Activated CD4-positive, alpha-beta memory T cell treated with anti-CD3 and anti-CD28 coated beads for 36 hours (primary cell): ENCODE measurements at regions of chr10 and their contacts with region 1.

Region 1: DNA sequence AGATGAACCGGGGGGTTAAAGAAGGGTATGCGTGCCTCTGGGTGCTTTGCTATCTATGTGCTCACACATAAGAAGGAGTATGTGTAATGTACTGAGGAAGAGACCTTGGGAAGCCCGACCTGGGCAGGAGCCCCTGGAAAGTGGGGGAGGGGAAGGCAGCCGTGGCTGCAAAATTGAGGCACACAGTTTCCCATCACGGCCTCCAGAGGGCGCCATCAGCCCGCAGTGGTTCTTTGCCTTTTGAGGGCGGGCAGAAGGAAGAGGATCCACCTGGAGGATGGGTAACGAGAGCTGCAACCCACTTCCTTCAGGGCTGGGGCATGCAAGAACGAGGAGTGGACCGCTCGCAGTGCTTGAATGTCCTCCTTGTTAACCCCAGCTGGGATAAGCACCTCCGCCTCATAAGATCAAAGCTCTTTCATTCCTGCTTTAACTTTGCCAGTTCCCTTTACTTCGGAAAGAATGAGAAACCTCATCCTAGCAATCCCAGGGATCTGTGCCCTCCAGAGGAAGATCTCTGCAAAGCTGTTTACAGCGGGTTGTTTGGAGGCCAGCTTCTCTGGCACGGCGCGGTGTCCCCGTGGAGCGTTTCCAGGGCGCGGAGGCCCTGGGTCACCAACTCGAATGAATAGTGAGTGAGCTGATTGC is 77.9 kb downstream of the PCGF5 start:
- DNase-seq: peak; percentile 89
- H3K4me3 Mint-ChIP-seq: peak overlapping the region; percentile 60
- H3K27ac Mint-ChIP-seq: no peak overlapping the region
- H3K4me1 Mint-ChIP-seq: peaks cover 8% of the 10 kb centered on the region
- H3K27me3 Mint-ChIP-seq: peaks cover 4% of the 10 kb centered on the region

Region 2: DNA sequence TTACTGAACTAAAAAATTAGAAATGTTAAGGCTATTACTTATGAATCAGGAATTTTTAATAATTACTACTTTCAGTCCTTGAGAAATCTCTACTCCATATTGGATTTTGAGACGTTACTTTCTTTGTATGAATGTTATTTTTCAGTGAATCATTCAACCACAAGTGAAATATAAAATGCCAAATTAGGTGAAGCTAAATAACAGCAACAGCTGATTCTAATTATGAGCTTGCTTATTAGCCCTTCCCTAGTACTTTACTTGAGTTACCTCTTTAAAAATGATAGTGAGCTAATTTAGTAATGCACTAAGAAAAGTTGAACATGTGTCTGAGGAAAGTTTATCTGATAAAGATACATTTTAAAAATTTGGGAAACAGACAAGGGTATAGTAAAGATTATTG is 26.5 kb before region 1 on chr10:
- CTCF ChIA-PET with region 1: interaction called, 21 read pairs
- POLR2A ChIA-PET with region 1: interaction called, 3 read pairs
- intact Hi-C with region 1: no loop called
- DNase-seq: no peak
- H3K4me3 Mint-ChIP-seq: no peak overlapping the region
- H3K27ac Mint-ChIP-seq: no peak overlapping the region
- H3K4me1 Mint-ChIP-seq: no peaks in the 10 kb centered on the region
- H3K27me3 Mint-ChIP-seq: no peaks in the 10 kb centered on the region

Region 3: DNA sequence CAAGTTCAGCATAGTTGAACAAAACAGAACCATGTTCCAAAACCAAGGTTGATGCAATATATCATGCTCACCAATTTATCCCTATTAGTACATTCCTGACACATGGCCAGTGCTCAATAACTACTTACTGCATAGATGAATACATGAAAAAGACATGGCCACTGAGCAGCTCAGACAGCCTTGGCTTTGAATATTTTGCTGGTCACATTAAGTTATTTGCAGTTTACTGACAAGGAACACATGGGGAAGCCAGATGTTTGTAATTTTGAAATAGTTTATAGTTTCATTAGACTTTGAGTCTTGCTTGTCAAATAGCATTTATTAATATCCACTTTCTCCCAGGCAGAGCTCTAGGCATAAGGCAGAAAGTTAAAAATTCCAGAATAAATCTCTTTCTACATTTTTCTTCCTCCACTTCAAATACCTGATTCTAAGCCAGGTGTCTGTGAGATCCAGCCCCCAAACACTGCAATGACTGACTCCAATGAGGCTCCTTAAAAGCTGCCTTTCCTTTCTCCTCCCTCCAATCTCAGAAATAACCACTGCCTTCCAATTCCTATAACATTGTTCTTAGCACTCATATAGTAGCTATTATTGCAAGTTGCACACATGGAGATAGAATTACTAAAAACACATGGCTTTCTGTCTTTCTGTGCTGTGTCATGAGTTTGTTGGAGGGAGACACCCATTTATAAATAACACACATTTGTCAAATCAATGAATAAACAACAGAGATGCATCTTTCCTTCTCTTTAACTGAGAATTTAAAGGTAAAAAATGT is 13.4 kb after region 1 on chr10:
- CTCF ChIA-PET with region 1: interaction called, 19 read pairs
- POLR2A ChIA-PET with region 1: interaction called, 3 read pairs
- intact Hi-C with region 1: no loop called
- DNase-seq: no peak
- H3K4me3 Mint-ChIP-seq: no peak overlapping the region
- H3K27ac Mint-ChIP-seq: no peak overlapping the region
- H3K4me1 Mint-ChIP-seq: peaks cover 10% of the 10 kb centered on the region
- H3K27me3 Mint-ChIP-seq: peaks cover 12% of the 10 kb centered on the region

Region 4: DNA sequence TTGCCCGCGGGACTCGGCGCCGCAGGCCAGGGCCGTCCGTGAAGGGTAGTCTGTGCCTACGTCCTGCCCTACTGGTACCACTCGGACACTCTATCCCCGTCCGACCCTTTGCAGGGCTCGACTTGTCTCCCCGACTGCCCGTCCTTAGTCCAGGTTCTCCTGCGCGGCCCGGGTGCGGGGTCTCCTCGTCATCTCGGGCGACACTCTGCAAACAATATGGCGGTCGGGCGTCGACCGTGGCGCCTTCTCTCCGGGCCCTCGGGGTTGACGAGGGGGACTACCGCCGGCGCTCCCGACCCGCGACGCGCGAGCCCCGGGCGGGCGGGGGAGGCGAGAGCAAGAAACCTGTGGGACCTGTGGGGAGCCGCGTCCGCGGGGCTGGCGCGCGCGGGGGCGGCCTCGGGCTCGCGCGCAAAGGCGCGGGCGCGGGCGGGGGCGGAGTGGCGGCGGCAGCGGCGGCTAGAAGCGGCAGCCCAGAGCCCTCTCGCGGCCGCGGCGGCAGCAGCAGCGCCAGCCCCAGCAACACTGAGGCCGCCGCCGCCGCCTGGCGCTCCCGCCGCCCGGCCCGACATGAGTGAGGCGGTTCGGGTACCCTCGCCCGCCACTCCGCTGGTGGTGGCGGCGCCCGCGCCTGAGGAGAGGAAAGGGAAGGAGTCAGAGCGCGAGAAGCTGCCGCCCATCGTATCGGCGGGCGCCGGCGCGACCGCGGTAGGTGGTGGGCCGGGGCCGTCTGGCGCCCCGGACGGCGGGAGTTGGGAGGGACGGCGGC is 111.7 kb after region 1 on chr10 and contains the start of gene HECTD2:
- CTCF ChIA-PET with region 1: interaction called, 7 read pairs
- POLR2A ChIA-PET with region 1: no interaction called
- intact Hi-C with region 1: loop called (anchors 1 kb)
- DNase-seq: peak; percentile 82
- H3K4me3 Mint-ChIP-seq: peak within 1 kb of the TSS; percentile 79
- H3K27ac Mint-ChIP-seq: peak within 1 kb of the TSS; percentile 83
- H3K4me1 Mint-ChIP-seq: peaks cover 13% of the 10 kb centered on the region
- H3K27me3 Mint-ChIP-seq: no peaks in the 10 kb centered on the region
- total RNA-seq, gene HECTD2: 4.0 to 5.5 TPM

Region 5: DNA sequence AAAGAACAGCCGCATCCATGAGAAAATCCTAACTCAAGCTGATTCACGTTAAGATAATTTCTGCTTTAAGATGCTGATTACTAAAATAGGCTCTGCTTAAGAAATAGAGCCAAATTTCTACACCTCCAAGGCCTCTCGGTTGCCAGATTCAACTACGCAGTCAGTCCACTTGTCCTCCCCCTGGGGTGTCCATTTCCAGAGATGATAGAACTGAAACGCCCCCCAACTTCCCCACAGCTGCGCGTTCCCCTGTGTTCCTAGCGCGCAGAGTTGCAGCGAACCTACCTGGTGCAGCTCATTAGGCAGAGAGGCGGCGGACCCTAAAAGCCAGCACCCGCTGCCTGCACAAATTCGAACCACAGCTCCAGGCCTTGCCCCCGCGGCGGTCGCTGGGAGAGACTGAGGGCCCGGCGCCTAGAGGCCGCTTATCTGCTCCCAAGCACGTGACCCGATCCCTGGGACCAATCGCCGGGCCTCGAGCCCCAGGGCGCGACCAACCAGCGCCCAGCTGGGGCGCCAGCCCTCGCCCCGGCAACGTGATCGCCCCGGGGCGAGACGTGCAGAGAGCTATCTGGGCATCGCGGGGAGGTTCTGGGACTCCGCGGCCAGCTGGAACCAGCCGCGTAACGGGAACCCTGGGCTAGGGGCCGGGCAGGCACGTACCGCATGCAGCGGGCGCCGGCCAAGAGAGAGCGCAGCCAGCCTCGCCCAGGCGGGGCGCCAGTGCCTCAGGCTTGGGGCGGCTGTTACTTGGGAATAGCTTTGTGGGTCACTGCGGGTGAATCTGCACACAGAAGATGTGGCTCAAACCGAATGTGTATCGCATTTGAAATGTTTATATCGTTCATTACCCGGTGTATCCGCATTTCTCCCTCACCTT is 334.6 kb after region 1 on chr10 and contains the start of gene PPP1R3C:
- CTCF ChIA-PET with region 1: interaction called, 129 read pairs
- POLR2A ChIA-PET with region 1: interaction called, 4 read pairs
- intact Hi-C with region 1: loop called (anchors 1 kb)
- DNase-seq: peak; percentile 70
- H3K4me3 Mint-ChIP-seq: peak within 1 kb of the TSS; percentile 43
- H3K27ac Mint-ChIP-seq: no peak within 1 kb of the TSS
- H3K4me1 Mint-ChIP-seq: peaks cover 6% of the 10 kb centered on the region
- H3K27me3 Mint-ChIP-seq: peaks cover 47% of the 10 kb centered on the region
- total RNA-seq, gene PPP1R3C: 0.07 TPM in 1 of 2 experiments, not detected in the other

Region 6: DNA sequence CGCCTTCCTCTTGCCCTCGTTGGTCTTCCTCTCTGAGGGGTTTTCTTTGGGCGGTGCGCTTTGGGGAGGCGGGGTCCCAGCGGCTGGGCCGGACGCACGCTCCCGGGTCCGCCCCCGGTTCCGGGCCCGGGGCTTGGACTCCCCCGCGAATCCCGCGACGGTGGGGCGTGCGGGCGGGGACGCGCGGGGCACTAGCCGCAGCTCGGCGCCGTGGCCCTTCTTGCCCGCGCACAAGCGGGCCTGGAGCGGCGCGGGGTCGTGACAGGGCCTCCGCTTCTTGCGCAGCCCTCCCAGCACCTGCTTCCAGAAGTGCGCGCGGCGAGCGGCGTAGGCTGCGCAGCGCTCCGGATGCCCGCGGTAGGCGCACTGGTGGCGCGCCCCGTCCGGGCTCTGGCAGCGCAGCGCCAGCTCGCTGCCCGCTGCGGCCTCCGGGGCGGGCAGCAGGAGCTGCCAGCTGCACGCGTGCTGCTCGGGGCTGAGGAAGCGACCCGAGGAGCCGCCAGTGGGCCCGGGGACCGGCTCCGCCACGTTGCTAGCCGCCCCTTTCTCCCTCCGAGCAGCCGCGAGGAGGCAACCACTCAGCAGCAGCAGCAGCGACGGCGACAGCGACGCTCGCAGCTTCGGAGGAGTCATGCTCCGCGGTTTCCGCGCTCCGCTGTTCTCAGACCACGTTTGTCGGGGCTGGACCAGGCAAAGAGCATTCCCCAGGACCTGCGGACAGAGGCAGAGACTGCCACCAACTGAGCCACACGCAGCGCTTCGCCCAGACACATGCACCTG is 610.2 kb after region 1 on chr10:
- CTCF ChIA-PET with region 1: interaction called, 15 read pairs
- POLR2A ChIA-PET with region 1: no interaction called
- intact Hi-C with region 1: loop called (anchors 2 kb)
- DNase-seq: peak; percentile 82
- H3K4me3 Mint-ChIP-seq: peak overlapping the region; percentile 91
- H3K27ac Mint-ChIP-seq: peak overlapping the region; percentile 75
- H3K4me1 Mint-ChIP-seq: peaks cover 16% of the 10 kb centered on the region
- H3K27me3 Mint-ChIP-seq: peaks cover 5% of the 10 kb centered on the region